GM12878 (cell line): ENCODE measurements at regions of chr17 and their contacts with region 1.

Region 1: DNA sequence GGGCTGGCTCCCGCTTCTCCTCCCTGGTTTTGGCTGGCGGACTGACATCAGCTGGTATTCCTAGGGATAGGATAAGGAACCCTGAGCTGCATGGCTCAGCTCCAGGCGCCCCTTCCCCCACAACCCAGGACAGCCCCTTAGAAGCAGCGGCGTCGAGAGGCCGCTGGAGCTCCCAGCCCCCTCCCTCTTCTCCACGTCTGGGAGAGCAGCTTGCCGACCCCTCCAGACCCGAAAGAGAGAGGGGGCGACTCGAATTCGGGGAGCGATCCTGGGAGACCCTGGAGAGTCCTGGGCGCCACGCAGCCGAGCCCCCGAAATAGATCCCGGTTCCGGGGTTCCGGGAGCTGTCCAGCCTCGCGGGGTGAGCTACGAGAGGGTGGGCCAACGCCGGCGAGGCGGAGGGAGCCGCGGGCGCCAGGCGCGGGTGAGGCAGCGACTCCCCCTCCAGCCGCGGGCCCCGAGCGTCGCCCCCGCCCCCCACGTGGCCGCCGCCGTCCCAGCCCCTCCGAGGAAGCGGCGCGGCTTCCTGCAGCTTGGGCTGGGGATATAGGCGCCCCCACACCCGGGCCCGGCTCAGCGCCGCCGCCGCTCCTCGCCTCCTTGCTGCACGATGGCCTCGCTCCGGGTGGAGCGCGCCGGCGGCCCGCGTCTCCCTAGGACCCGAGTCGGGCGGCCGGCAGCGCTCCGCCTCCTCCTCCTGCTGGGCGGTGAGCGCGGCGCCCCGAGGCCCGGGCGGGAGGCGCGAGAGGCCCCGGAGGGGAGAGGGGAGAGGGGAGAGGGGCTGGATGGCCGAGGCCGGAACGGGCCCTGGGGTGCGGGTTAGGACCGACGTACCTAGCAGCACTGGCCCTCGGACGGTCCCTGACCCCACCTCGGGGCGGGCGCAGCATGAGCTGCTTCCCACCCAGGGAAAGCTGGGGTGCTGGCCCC is at the start of gene RAMP2:
- DNase-seq: no peak
- ATAC-seq: peak; percentile 36
- H3K4me3 ChIP-seq: peak within 1 kb of the TSS; percentile 37; the same call in 1 of the 2 replicates
- H3K27ac ChIP-seq: no peak within 1 kb of the TSS
- H3K4me1 ChIP-seq: peaks cover 17% of the 10 kb centered on the region
- H3K27me3 ChIP-seq: no peaks in the 10 kb centered on the region
- CTCF ChIP-seq: no peak
- EP300 ChIP-seq: no peak
- POLR2A ChIP-seq: no peak
- RAD21 ChIP-seq: no peak
- polyA plus RNA-seq, gene RAMP2: 0.20 to 0.21 TPM

Region 2: DNA sequence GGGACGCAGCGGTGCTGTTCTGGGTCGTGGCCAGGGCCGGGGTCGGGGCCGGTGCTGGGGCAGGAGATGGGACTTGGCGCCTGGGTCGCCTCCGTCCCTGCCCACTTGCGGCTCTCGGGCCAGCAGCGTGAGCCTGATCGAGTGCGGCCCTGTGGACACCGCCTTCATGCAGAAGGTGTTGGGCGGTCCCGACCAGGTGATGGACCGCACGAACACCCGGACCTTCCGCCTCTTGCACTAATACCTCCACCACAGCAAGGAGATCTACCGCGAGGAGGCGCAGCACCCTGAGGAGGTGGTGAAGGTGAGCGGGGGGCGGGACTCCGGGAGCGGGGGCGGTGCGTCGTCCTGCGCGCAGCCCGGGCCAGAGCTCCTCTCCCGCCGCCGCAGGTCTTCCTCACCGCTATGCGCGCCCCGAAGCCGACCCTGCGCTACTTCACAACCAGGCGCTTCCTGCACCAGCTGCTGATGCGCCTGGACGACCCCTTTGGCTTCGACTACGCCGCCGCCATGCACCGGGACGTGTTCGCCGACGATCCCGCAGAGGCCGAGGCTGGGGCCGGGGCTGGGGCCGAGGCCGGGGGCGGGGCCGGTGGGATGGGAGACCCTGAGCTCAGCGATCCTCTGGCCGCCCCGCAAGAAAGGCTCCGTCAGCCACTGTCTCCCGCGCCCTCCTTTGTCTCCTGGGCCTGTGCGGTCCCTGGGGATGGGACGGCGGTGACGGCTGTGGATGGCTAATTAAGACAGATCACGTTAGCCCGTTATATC is 212.7 kb before region 1 on chr17:
- CTCF ChIA-PET with region 1: interaction called, 11 read pairs
- POLR2A ChIA-PET with region 1: no interaction called
- RAD21 ChIA-PET with region 1: no interaction called
- SMC1A ChIA-PET with region 1: interaction called, 4 read pairs
- in situ Hi-C with region 1: no loop called
- intact Hi-C with region 1: loop called (anchors 5 kb)
- DNase-seq: no peak
- ATAC-seq: peak; percentile 96
- H3K4me3 ChIP-seq: peak overlapping the region; percentile 58
- H3K27ac ChIP-seq: no peak overlapping the region
- H3K4me1 ChIP-seq: peaks cover 11% of the 10 kb centered on the region
- H3K27me3 ChIP-seq: no peaks in the 10 kb centered on the region
- CTCF ChIP-seq: peak; percentile 60 to 71 (median 69); a peak in 5 of 6 replicates
- EP300 ChIP-seq: no peak
- POLR2A ChIP-seq: peak; percentile 71; the same call in 1 of the 2 replicates
- RAD21 ChIP-seq: peak; percentile 59

Region 3: GRCh38 chr17:42618442-42619150 is 142.3 kb before region 1 on chr17:
- CTCF ChIA-PET with region 1: interaction called, 9 read pairs
- POLR2A ChIA-PET with region 1: interaction called, 3 read pairs
- RAD21 ChIA-PET with region 1: interaction called, 12 read pairs
- SMC1A ChIA-PET with region 1: interaction called, 4 read pairs
- in situ Hi-C with region 1: no loop called
- intact Hi-C with region 1: no loop called
- DNase-seq: peak; percentile 93
- ATAC-seq: peak; percentile 86
- H3K4me3 ChIP-seq: peak overlapping the region; percentile 58
- H3K27ac ChIP-seq: peak overlapping the region; percentile 91
- H3K4me1 ChIP-seq: peaks cover 33% of the 10 kb centered on the region
- H3K27me3 ChIP-seq: no peaks in the 10 kb centered on the region
- CTCF ChIP-seq: peak in 1 of 3 experiments; percentile 62; a peak in 3 of 6 replicates
- EP300 ChIP-seq: peak; percentile 49 to 84; a peak in 2 of 4 replicates
- POLR2A ChIP-seq: no peak; the same call in 1 of the 2 replicates
- RAD21 ChIP-seq: peak; percentile 64

Region 4: DNA sequence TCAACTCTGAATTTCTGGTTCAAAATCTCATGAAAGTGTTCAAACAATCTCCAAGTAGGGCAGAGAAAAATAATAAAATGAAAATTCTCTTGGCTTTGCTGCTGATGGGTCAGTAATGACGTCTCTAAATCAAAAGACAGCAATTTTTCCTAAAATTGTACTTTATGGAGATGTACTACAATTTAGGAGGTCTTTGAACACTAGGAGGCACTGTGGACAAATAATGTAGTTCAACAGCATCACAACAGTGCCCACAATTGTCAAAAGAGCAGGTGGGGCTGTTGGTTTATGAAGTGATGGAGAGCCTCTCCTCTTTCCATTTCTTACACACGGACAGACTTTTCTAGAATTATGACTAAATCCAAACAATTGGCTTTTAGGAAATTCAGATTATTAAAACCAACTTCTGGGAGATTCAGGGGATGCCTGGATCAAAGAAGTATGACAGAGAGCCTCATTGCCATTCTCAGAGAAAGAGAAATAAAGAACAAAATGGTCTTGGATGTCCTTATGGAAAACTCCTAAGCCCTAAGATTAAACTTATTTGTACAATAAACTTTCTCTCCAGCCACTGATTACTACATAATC is 39.8 kb before region 1 on chr17:
- CTCF ChIA-PET with region 1: interaction called, 130 read pairs
- POLR2A ChIA-PET with region 1: interaction called, 3 read pairs
- RAD21 ChIA-PET with region 1: interaction called, 8 read pairs
- SMC1A ChIA-PET with region 1: interaction called, 11 read pairs
- in situ Hi-C with region 1: no loop called
- intact Hi-C with region 1: loop called (anchors 1 kb)
- DNase-seq: no peak
- ATAC-seq: peak; percentile 94
- H3K4me3 ChIP-seq: no peak overlapping the region
- H3K27ac ChIP-seq: no peak overlapping the region
- H3K4me1 ChIP-seq: no peaks in the 10 kb centered on the region
- H3K27me3 ChIP-seq: no peaks in the 10 kb centered on the region
- CTCF ChIP-seq: peak; percentile 61 to 83 (median 78); a peak in 5 of 6 replicates
- EP300 ChIP-seq: no peak
- POLR2A ChIP-seq: no peak
- RAD21 ChIP-seq: peak; percentile 73

Region 5: GRCh38 chr17:42744806-42745617 is 15.9 kb before region 1 on chr17 and contains the start of gene EZH1:
- CTCF ChIA-PET with region 1: interaction called, 21 read pairs
- POLR2A ChIA-PET with region 1: interaction called, 6 read pairs
- RAD21 ChIA-PET with region 1: interaction called, 7 read pairs
- SMC1A ChIA-PET with region 1: interaction called, 17 read pairs
- in situ Hi-C with region 1: no loop called
- intact Hi-C with region 1: no loop called
- DNase-seq: peak; percentile 70
- ATAC-seq: peak; percentile 96
- H3K4me3 ChIP-seq: peak within 1 kb of the TSS; percentile 63
- H3K27ac ChIP-seq: peak within 1 kb of the TSS; percentile 60
- H3K4me1 ChIP-seq: peaks cover 8% of the 10 kb centered on the region; the same call in 1 of the 2 replicates
- H3K27me3 ChIP-seq: no peaks in the 10 kb centered on the region
- CTCF ChIP-seq: no peak
- EP300 ChIP-seq: no peak
- POLR2A ChIP-seq: peak; percentile 83
- RAD21 ChIP-seq: no peak
- polyA plus RNA-seq, gene EZH1: 6.1 to 6.2 TPM

Region 6: GRCh38 chr17:42773290-42774035 is 12.5 kb after region 1 on chr17 and contains the start of gene VPS25:
- CTCF ChIA-PET with region 1: interaction called, 38 read pairs
- POLR2A ChIA-PET with region 1: interaction called, 11 read pairs
- RAD21 ChIA-PET with region 1: interaction called, 18 read pairs
- SMC1A ChIA-PET with region 1: interaction called, 20 read pairs
- in situ Hi-C with region 1: no loop called
- intact Hi-C with region 1: no loop called
- DNase-seq: no peak
- ATAC-seq: peak; percentile 93
- H3K4me3 ChIP-seq: peak within 1 kb of the TSS; percentile 75
- H3K27ac ChIP-seq: peak within 1 kb of the TSS; percentile 86
- H3K4me1 ChIP-seq: peaks cover 26% of the 10 kb centered on the region
- H3K27me3 ChIP-seq: no peaks in the 10 kb centered on the region
- CTCF ChIP-seq: peak in 1 of 3 experiments; percentile 13; a peak in 1 of 6 replicates
- EP300 ChIP-seq: no peak
- POLR2A ChIP-seq: peak; percentile 97
- RAD21 ChIP-seq: no peak
- polyA plus RNA-seq, gene VPS25: 131 to 185 TPM